T-cell (primary cell): ENCODE measurements at regions of chr2 and their contacts with region 1.

Region 1: GRCh38 chr2:88671786-88672427 is 19.6 kb upstream of the RPIA start:
- DNase-seq: peak in 5 of 35 experiments; percentile 2 to 66 (median 9)
- ATAC-seq: peak; percentile 48 to 59 (median 54)
- H3K4me3 ChIP-seq: no peak overlapping the region
- H3K4me3 Mint-ChIP-seq: no peak overlapping the region
- H3K27ac ChIP-seq: no peak overlapping the region
- H3K27ac Mint-ChIP-seq: no peak overlapping the region
- H3K4me1 ChIP-seq: no peaks in the 10 kb centered on the region
- H3K4me1 Mint-ChIP-seq: peaks cover 0 to 5% (median 3%) of the 10 kb centered on the region in 3 donors
- H3K27me3 ChIP-seq: no peaks in the 10 kb centered on the region
- H3K27me3 Mint-ChIP-seq: no peaks in the 10 kb centered on the region

Region 2: GRCh38 chr2:88372042-88372441 is 299.9 kb before region 1 on chr2:
- CTCF ChIA-PET with region 1: no interaction called
- POLR2A ChIA-PET with region 1: no interaction called
- DNase-seq: no peak
- ATAC-seq: no peak
- H3K4me3 ChIP-seq: no peak overlapping the region
- H3K4me3 Mint-ChIP-seq: no peak overlapping the region
- H3K27ac ChIP-seq: no peak overlapping the region
- H3K27ac Mint-ChIP-seq: no peak overlapping the region
- H3K4me1 ChIP-seq: no peaks in the 10 kb centered on the region
- H3K4me1 Mint-ChIP-seq: no peaks in the 10 kb centered on the region
- H3K27me3 ChIP-seq: peaks cover 2 to 8% of the 10 kb centered on the region in 2 experiments
- H3K27me3 Mint-ChIP-seq: peaks cover 17% of the 10 kb centered on the region in 2 donors

Region 3: DNA sequence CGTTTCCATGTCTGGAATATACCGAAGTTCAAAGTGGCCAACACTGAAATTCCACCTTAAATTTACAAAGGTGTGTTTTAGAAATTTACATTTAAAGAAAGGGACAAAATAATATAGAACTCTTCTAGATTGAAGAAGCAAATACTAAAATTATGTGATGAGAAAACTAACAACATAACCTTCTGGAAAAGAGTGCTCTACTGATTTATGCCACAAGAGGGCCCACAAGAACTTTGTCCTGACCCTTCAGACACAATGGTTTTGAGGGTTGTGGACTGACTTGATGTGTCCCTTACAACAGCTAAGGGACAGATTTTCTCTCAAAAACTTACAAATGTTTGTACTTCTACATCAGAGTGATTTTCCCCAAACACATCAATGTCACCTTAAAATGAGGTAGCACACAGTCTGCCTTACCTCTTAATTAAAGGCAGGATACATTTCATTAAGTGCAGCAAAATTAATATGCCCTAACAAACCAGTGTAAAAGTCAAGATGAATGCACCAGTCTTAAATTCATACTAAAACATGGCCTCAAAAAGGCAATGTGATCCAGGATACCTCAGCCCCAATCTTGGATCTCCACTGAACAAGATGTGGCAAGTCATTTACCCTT is 80.8 kb before region 1 on chr2:
- CTCF ChIA-PET with region 1: interaction called, 5 to 10 read pairs
- POLR2A ChIA-PET with region 1: no interaction called
- DNase-seq: peak in 24 of 35 experiments; percentile 1 to 71 (median 18)
- ATAC-seq: peak; percentile 60 to 72 (median 64)
- H3K4me3 ChIP-seq: no peak overlapping the region
- H3K4me3 Mint-ChIP-seq: no peak overlapping the region
- H3K27ac ChIP-seq: no peak overlapping the region
- H3K27ac Mint-ChIP-seq: no peak overlapping the region
- H3K4me1 ChIP-seq: no peaks in the 10 kb centered on the region
- H3K4me1 Mint-ChIP-seq: peaks cover 0 to 4% (median 3%) of the 10 kb centered on the region in 3 donors
- H3K27me3 ChIP-seq: no peaks in the 10 kb centered on the region
- H3K27me3 Mint-ChIP-seq: no peaks in the 10 kb centered on the region

Region 4: DNA sequence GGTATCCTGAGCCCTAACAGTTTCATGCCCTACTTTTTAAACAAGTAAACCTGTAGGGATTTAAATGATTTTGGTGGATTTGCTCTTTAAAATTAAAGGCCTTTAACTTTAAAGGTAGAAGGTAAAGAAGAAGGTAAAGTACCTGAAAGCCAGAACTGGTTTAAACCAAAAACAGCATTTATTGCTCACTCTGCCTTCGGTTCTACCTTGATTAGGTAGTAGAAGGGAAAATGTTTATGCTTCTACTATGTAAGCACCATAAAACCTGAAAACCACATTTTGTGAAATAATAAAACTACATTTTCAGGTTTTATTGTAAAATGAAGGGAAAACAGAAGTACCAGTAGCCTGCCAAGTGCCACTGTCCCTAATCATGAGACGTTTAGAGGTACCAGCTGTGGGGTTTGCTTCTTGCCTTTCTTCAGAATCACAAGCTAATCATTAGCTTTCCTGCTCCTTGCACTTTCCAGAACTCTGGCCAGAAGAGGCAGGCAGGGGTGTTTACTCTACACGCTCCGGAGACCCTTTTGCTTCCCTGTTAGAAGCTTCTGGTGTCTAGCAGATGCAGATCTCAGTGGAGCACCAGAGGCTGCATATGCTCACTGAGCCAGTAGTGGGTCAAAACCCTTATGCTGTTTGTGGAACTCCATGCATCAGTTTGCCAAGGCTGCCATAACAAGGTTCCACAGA is 52.9 kb after region 1 on chr2:
- CTCF ChIA-PET with region 1: no interaction called
- POLR2A ChIA-PET with region 1: no interaction called
- DNase-seq: no peak
- ATAC-seq: no peak
- H3K4me3 ChIP-seq: no peak overlapping the region
- H3K4me3 Mint-ChIP-seq: no peak overlapping the region
- H3K27ac ChIP-seq: no peak overlapping the region
- H3K27ac Mint-ChIP-seq: no peak overlapping the region
- H3K4me1 ChIP-seq: peaks cover 0 to 3% of the 10 kb centered on the region in 2 experiments
- H3K4me1 Mint-ChIP-seq: peaks cover 24 to 40% (median 30%) of the 10 kb centered on the region in 3 donors
- H3K27me3 ChIP-seq: no peaks in the 10 kb centered on the region
- H3K27me3 Mint-ChIP-seq: no peaks in the 10 kb centered on the region

Region 5: DNA sequence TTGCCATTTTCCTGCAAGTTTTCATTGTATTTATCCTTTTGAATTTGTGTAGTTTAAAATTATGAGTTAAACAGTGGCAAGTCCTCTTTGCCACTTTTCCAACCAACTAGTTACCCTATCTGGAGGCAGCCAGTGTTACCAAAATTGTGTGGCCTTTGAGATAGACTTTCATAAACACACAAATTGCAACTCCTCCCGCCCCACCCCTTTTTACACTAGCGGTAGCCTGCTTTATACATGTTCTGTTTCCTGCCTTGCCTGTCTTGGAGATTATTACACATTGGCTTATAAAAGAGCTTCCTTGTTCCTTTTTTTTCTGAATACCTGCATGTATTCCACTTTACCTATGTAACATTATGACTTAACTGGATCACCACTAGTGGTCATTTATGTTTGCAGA is 76.1 kb after region 1 on chr2:
- CTCF ChIA-PET with region 1: no interaction called
- POLR2A ChIA-PET with region 1: no interaction called
- DNase-seq: peak in 1 of 35 experiments; percentile 17
- ATAC-seq: peak in 3 of 4 experiments; percentile 21 to 44 (median 35)
- H3K4me3 ChIP-seq: no peak overlapping the region
- H3K4me3 Mint-ChIP-seq: peak overlapping the region in 1 of 3 donors; percentile 55
- H3K27ac ChIP-seq: no peak overlapping the region
- H3K27ac Mint-ChIP-seq: peak overlapping the region; percentile 80 to 87
- H3K4me1 ChIP-seq: peaks cover 7 to 10% of the 10 kb centered on the region in 2 experiments
- H3K4me1 Mint-ChIP-seq: peaks cover 45 to 80% (median 47%) of the 10 kb centered on the region in 3 donors
- H3K27me3 ChIP-seq: no peaks in the 10 kb centered on the region
- H3K27me3 Mint-ChIP-seq: no peaks in the 10 kb centered on the region